ENCODE measurements at regions of chr20 and their contacts with region 1.

Region 1: DNA sequence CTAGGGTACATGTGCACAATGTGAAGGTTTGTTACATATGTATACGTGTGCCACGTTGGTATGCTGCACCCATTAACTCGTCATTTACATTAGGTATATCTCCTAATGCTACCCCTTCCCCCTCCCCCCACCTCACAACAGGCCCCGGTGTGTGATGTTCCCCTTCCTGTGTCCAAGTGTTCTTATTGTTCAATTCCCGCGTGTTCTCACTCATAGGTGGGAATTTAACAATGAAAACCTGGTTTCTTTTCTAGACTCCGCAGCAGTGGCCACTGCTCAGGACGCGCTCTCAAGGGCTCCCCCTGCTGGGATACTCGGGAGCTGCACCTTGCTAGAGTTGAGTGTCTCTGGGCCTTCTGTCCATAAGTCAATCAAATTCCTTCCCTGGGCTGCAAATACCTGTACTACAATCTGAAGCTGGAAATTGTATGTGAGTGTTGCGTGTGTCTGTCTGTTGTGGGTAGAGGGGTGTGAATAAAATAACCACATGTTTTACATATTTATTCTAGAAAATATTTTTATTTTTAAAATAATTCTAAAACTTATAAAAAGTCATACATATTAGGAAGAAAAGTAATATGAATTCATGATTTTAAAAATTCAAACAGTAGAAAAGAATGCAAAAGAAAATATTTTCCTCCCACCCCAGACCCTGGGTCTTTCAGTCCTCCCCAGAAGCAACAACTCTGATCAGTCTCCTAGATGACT is 8.2 kb upstream of the CEP250 start:
- DNase-seq: peak; percentile 82
- H3K4me3 ChIP-seq: no peak overlapping the region
- CTCF ChIP-seq: peak; percentile 98

Region 2: DNA sequence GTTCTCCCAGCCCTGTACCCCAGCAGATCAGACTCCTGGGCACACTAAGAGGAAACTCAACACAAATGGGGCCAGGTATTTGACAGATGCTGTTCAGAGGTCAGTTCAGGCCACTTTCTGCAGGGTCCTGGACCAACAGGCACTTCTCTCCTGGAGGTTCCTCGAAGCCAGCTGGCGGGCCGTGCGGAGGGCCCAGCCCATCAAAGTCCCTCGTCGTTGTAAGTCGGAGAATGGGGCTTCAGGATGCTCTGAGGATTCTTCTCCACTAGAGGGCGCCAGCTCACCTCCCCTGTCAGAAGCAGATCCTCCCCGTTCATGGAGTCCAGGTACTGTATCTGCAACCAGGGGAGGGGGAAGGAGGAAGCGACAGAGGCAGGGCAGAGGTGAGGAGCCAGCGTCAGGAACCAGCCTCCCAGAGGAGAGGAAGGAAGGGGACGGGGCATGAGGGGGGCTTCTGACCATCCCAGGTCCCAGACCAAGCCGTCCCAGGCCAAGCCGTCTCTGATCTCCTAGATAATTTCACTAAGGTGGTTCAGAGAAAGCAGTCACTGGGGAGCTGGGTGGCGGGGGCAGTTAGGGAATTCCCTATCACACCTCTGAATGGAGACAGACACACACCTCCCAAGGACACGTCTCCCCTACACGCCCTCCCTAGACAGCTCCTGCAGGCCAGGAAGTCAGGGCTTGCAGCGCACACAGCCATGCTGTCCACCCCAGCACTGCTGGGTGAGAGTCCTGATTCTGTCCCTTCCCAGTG is 143.3 kb before region 1 on chr20:
- in situ Hi-C with region 1: loop called (anchors 25 kb)
- DNase-seq: peak; percentile 92
- H3K4me3 ChIP-seq: no peak overlapping the region
- CTCF ChIP-seq: peak; percentile 91

Region 3: GRCh38 chr20:35561268-35561667 is 114.0 kb after region 1 on chr20:
- in situ Hi-C with region 1: no loop called
- DNase-seq: peak; percentile 49
- H3K4me3 ChIP-seq: no peak overlapping the region
- CTCF ChIP-seq: peak; percentile 39